ENCODE measurements at regions of chr5 and their contacts with region 1.

Region 1: GRCh38 chr5:473554-474192 is 30.7 kb downstream of the EXOC3 start:
- DNase-seq: peak; percentile 35
- H3K4me3 Mint-ChIP-seq: peak overlapping the region; percentile 83
- H3K27ac Mint-ChIP-seq: no peak overlapping the region
- H3K4me1 Mint-ChIP-seq: no peaks in the 10 kb centered on the region
- H3K27me3 Mint-ChIP-seq: peaks cover 53% of the 10 kb centered on the region
- CTCF ChIP-seq: no peak

Region 2: DNA sequence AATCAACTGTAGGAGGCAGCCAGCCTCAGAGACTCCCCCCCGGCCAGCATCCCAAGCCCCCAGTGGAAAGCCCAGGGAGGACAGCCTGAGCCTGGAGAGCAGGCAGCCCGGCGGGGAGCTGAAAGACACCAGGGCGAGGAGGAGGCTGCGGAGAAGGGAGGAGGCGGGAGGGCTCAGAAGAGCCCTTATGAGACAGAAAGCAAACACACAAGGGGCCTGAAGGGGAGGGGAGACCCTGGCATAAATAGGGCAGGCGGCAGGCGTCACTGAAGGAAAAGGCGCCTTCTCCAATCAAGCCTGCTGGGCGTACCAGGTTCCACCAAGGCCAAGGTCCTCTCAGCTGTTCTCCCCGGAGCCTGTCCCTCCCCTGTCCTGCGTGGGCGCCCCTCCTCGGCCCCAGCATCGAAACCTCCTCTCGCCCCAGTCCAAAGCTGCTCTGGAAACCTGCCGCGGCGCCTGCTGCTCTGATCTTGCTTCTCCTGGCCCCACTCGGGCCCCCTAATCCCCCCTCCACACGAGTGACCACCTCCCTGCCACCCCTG is 49.3 kb after region 1 on chr5:
- CTCF ChIA-PET with region 1: interaction called, 10 read pairs
- intact Hi-C with region 1: no loop called
- DNase-seq: no peak
- H3K4me3 Mint-ChIP-seq: peak overlapping the region; percentile 5
- H3K27ac Mint-ChIP-seq: no peak overlapping the region
- H3K4me1 Mint-ChIP-seq: no peaks in the 10 kb centered on the region
- H3K27me3 Mint-ChIP-seq: peaks cover 84% of the 10 kb centered on the region
- CTCF ChIP-seq: no peak